Heart left ventricle (tissue), 16 donors: ENCODE measurements at regions of chr4 and their contacts with region 1.

Region 1: DNA sequence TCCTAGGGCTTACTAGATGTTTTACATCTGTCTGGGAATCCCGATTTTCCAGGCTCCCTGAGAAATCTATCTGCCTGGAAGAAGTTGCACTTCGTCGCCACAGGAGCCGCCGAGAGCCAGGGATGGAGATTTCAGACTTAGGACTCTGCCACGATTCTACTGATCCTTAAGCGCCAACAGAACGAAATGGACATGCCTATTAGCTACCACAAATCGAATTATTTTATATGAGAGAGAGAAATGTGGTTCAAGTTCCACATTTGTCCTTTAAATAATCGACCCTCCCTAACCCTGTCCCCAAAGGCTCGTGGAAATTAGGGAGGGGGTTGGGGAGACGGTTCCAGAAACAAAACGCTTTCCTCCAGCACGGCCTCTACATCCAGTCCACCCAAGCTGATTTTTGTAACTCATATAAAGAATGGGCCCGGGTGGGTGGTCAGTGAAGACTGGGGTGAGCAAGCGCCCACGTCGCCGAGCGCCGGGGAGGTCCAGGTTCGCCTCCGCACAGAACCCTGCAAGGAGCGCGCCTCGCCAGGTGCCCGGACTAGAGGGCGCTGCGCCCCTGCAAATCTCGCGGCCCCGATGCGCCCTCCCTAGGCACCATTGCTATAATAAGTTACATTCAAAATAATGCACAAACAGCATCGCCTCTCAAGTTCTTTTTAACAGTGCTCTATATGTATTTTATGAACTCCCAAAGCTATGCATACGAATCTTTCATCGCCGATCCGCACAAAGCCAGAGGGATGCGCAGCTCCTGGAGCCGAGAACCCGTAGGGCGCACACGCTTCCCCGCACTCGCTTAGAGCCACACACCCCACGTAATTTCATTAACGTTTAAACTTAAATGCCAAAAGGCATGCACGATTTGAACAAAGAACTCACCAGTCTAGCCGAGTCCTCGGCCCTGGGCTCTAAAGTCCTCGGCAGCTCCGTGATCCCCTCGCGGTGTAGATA is 2.1 kb upstream of the FAT1 start:
- DNase-seq: peak; percentile 76 to 84 (median 83)
- ATAC-seq: peak; percentile 71 to 90 (median 81)
- H3K4me3 ChIP-seq: peak overlapping the region; percentile 66 to 88 (median 80)
- H3K27ac ChIP-seq: peak overlapping the region; percentile 6 to 97 (median 92)
- H3K4me1 ChIP-seq: peaks cover 0 to 22% (median 3%) of the 10 kb centered on the region in 12 donors
- H3K27me3 ChIP-seq: peaks cover 0 to 63% (median 0%) of the 10 kb centered on the region in 9 donors
- CTCF ChIP-seq: peak in 11 of 12 donors; percentile 32 to 80 (median 64)
- POLR2A ChIP-seq: no peak

Region 2: GRCh38 chr4:186651624-186652023 is 74.1 kb before region 1 on chr4:
- intact Hi-C with region 1: no loop called
- DNase-seq: peak; percentile 75 to 82 (median 77)
- ATAC-seq: peak; percentile 95 to 96 (median 96)
- H3K4me3 ChIP-seq: peak overlapping the region in 11 of 12 donors; percentile 16 to 58 (median 43)
- H3K27ac ChIP-seq: peak overlapping the region in 11 of 12 donors; percentile 2 to 73 (median 52)
- H3K4me1 ChIP-seq: peaks cover 0 to 21% (median 9%) of the 10 kb centered on the region in 12 donors
- H3K27me3 ChIP-seq: peaks cover 0 to 3% (median 0%) of the 10 kb centered on the region in 9 donors
- CTCF ChIP-seq: no peak
- POLR2A ChIP-seq: no peak

Region 3: DNA sequence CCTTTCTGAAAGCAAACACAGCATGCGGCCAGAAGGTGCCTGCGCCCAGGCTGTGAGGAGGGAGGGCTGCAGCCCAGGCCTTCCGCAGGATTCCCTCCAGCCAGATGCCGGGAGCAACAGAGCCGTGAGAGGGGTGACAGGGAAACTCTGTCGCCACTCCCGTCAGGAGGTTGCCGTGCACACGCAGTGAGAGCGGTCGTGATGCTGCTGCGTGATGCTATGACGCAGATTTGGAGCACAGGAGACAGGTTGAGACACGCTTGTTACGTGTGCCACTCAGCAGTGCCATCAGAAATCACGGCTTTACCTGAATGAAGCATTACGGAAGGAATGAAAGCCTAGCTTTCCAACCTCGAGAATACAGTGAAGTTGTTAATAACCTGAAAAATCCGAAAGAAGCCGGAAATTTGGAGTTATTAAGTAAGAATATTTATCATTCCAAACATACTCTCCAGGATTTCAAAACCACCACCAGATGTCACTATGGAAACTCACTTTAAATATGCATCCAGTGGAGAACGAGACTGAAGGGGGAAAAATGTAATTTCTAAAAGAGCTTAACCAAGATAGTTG is 56.5 kb before region 1 on chr4:
- intact Hi-C with region 1: loop called in 9 of 10 experiments (anchors 1 to 5 kb)
- DNase-seq: peak in 1 of 5 donors; percentile 39
- ATAC-seq: peak in 3 of 4 donors; percentile 53 to 67 (median 58)
- H3K4me3 ChIP-seq: peak overlapping the region in 2 of 12 donors; percentile 12
- H3K27ac ChIP-seq: peak overlapping the region in 6 of 12 donors; percentile 8 to 49 (median 18)
- H3K4me1 ChIP-seq: peaks cover 0 to 32% (median 12%) of the 10 kb centered on the region in 12 donors
- H3K27me3 ChIP-seq: no peaks in the 10 kb centered on the region
- CTCF ChIP-seq: peak in 11 of 12 donors; percentile 39 to 66 (median 58)
- POLR2A ChIP-seq: no peak

Region 4: GRCh38 chr4:186904101-186904500 is 178.4 kb after region 1 on chr4:
- intact Hi-C with region 1: loop called in 1 of 10 experiments (anchors 5 kb)
- DNase-seq: no peak
- ATAC-seq: peak in 2 of 4 donors; percentile 60 to 80
- H3K4me3 ChIP-seq: no peak overlapping the region
- H3K27ac ChIP-seq: peak overlapping the region in 6 of 12 donors; percentile 0 to 56 (median 42)
- H3K4me1 ChIP-seq: peaks cover 0 to 27% (median 0%) of the 10 kb centered on the region in 12 donors
- H3K27me3 ChIP-seq: no peaks in the 10 kb centered on the region
- CTCF ChIP-seq: no peak
- POLR2A ChIP-seq: no peak

Region 5: GRCh38 chr4:187172340-187172761 is 446.6 kb after region 1 on chr4:
- intact Hi-C with region 1: loop called in 2 of 10 experiments (anchors 5 to 10 kb)
- DNase-seq: no peak
- ATAC-seq: peak in 2 of 4 donors; percentile 47 to 52
- H3K4me3 ChIP-seq: no peak overlapping the region
- H3K27ac ChIP-seq: peak overlapping the region in 2 of 12 donors; percentile 22 to 24
- H3K4me1 ChIP-seq: no peaks in the 10 kb centered on the region
- H3K27me3 ChIP-seq: no peaks in the 10 kb centered on the region
- CTCF ChIP-seq: no peak
- POLR2A ChIP-seq: no peak

Region 6: DNA sequence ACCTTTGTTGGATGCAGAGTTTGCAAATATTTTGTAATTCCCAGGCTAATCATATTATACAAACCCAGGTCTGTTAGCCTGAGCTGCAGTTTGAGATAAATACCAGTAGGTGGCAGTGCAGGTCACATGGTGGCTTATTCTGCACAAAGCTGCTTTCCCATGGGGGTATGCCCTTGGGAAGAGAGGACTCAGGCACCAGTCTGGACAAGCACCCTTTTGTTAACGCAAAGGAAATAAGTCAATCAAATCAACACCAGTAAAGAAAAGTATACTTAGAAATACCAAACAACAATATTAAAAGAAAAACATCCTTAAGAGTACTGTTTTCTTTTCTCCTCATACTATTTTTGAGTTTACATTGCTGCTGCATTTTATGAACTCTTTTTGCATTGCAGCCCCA is 880.8 kb after region 1 on chr4:
- intact Hi-C with region 1: loop called in 1 of 10 experiments (anchors 10 kb)
- DNase-seq: peak in 1 of 5 donors; percentile 34
- ATAC-seq: peak in 1 of 4 donors; percentile 57
- H3K4me3 ChIP-seq: no peak overlapping the region
- H3K27ac ChIP-seq: no peak overlapping the region
- H3K4me1 ChIP-seq: peaks cover 0 to 15% (median 0%) of the 10 kb centered on the region in 12 donors
- H3K27me3 ChIP-seq: peaks cover 0 to 12% (median 0%) of the 10 kb centered on the region in 9 donors
- CTCF ChIP-seq: peak; percentile 70 to 87 (median 83)
- POLR2A ChIP-seq: no peak